ENCODE measurements at regions of chr5 and their contacts with region 1.

Region 1: GRCh38 chr5:7261049-7261448 is 134.9 kb upstream of the ADCY2 start:
- DNase-seq: peak; percentile 76
- ATAC-seq: peak; percentile 48
- H3K4me3 ChIP-seq: no peak overlapping the region
- H3K27ac ChIP-seq: no peak overlapping the region
- H3K4me1 ChIP-seq: no peaks in the 10 kb centered on the region
- H3K27me3 ChIP-seq: peaks cover 22% of the 10 kb centered on the region
- CTCF ChIP-seq: peak; percentile 82

Region 2: GRCh38 chr5:7225826-7226225 is 35.2 kb before region 1 on chr5:
- CTCF ChIA-PET with region 1: no interaction called
- POLR2A ChIA-PET with region 1: no interaction called
- intact Hi-C with region 1: no loop called
- DNase-seq: no peak
- ATAC-seq: no peak
- H3K4me3 ChIP-seq: no peak overlapping the region
- H3K27ac ChIP-seq: no peak overlapping the region
- H3K4me1 ChIP-seq: no peaks in the 10 kb centered on the region
- H3K27me3 ChIP-seq: peaks cover 40% of the 10 kb centered on the region
- CTCF ChIP-seq: no peak

Region 3: DNA sequence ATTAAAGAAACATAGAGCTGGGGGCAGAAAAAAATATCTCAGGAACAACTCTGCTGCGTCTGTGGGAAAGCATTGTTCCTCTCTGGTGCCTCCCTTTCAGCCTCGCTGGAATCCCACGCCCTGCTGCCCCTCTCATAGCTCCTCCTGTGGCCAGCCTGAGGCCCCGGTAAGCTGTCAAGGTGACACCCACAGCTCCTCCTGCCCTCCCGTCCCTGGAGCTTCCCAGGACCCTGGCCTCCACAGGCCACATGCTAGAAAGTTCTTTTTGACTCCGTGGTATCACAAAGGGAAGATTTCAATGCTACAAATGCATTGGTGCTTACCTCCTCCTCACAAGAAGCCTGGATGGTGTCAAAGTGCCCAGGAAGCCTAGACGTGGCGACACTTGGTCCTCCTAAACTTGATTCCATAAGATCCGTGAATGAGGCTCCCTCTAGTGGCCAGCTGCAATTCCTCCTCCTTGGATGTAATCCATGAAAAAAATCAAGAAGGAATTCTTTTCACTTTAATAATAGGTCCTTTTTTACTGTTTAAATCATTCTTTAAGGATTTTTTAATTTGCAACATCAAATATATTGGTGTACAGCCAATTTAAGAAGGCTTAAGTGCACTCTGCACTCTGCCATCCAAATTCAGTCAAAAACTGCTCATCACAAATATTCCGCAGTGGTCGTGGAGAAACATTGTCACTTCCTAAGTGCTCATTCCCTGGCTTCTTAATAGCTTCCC is 485.0 kb after region 1 on chr5:
- CTCF ChIA-PET with region 1: no interaction called
- POLR2A ChIA-PET with region 1: no interaction called
- intact Hi-C with region 1: loop called (anchors 2 kb)
- DNase-seq: peak; percentile 84
- ATAC-seq: peak; percentile 57
- H3K4me3 ChIP-seq: no peak overlapping the region
- H3K27ac ChIP-seq: no peak overlapping the region
- H3K4me1 ChIP-seq: peaks cover 10% of the 10 kb centered on the region; the same call in 1 of the 2 replicates
- H3K27me3 ChIP-seq: peaks cover 42% of the 10 kb centered on the region
- CTCF ChIP-seq: peak; percentile 98

Region 4: GRCh38 chr5:7815892-7816534 is 555.0 kb after region 1 on chr5:
- CTCF ChIA-PET with region 1: no interaction called
- POLR2A ChIA-PET with region 1: no interaction called
- intact Hi-C with region 1: loop called (anchors 2 kb)
- DNase-seq: peak; percentile 83
- ATAC-seq: peak; percentile 96
- H3K4me3 ChIP-seq: no peak overlapping the region
- H3K27ac ChIP-seq: no peak overlapping the region
- H3K4me1 ChIP-seq: no peaks in the 10 kb centered on the region
- H3K27me3 ChIP-seq: peaks cover 82% of the 10 kb centered on the region
- CTCF ChIP-seq: peak; percentile 99